ENCODE measurements at regions of chr3 and their contacts with region 1.

Region 1: DNA sequence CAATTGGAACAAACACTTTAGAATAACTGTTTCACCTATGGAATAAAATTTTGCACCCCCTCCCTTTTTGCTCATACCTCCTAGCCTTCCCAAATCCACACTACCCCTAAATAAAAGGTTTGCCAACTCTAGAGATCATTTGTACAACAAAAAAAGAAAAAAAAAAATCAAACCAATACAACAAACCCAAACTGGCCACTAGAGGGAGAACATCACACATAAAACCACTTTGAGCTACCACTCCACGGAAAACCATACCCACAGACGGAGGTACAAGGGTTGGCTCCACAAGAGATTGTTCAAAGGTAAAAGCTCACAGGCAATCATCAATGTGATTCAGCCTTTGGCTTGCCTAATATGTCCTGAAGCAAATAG is 47.6 kb downstream of the SETMAR start:
- DNase-seq: no peak
- H3K4me3 ChIP-seq: peak overlapping the region in 3 of 4 donors; percentile 17 to 34 (median 27)
- H3K27ac ChIP-seq: peak overlapping the region; percentile 12 to 65 (median 39)
- H3K4me1 ChIP-seq: peaks cover 0 to 9% (median 0%) of the 10 kb centered on the region in 4 donors
- H3K27me3 ChIP-seq: no peaks in the 10 kb centered on the region
- CTCF ChIP-seq: peak; percentile 51 to 77 (median 72)
- EP300 ChIP-seq: no peak
- POLR2A ChIP-seq: no peak

Region 2: GRCh38 chr3:4416961-4417360 is 66.2 kb after region 1 on chr3:
- intact Hi-C with region 1: no loop called
- DNase-seq: no peak
- H3K4me3 ChIP-seq: no peak overlapping the region
- H3K27ac ChIP-seq: peak overlapping the region in 3 of 4 donors; percentile 12 to 57 (median 17)
- H3K4me1 ChIP-seq: peaks cover 0 to 9% (median 4%) of the 10 kb centered on the region in 4 donors
- H3K27me3 ChIP-seq: no peaks in the 10 kb centered on the region
- CTCF ChIP-seq: no peak
- EP300 ChIP-seq: no peak
- POLR2A ChIP-seq: no peak

Region 3: DNA sequence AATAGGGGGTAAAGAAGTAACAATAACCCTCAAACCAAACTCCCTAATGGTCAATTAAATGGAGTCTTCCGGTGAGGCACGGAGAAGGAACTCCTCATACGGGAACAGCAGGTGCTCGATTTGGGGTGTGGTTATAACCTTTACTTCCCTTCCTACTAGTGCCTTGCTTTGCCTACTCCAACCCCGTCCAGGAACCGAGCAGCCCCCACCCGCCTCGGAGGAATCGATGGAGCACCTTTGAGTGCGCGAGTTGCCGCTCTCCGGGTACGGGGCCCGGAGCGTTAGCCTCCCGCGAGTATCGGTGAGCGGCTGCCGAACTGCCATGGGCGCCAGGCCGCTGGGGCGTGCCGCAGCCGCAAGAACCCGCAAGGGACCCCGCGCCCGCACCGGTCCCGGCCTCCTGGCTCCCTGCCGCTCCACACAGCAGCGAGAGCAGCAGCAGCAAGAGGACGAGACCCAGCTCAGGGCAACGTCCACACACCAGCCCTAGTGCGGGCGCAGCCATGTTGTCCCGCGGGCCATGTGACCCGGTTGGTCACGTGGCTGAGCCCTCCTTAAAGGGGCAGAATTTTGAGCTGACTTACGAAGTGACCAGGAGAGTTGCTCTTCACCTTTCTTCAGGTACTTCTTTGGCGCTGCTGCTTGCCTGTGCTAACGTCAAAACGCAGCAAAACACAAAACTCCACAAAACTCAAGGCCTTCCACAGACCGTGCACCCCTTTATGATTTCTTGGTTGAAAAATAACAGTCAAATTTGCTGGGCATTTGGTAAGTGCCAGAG is 116.2 kb after region 1 on chr3 and contains the start of gene SUMF1:
- intact Hi-C with region 1: loop called (anchors 10 kb)
- DNase-seq: peak; percentile 89
- H3K4me3 ChIP-seq: peak within 1 kb of the TSS; percentile 77 to 88 (median 80)
- H3K27ac ChIP-seq: peak within 1 kb of the TSS; percentile 81 to 83 (median 82)
- H3K4me1 ChIP-seq: peaks cover 0 to 15% (median 8%) of the 10 kb centered on the region in 4 donors
- H3K27me3 ChIP-seq: no peaks in the 10 kb centered on the region
- CTCF ChIP-seq: no peak
- EP300 ChIP-seq: no peak
- POLR2A ChIP-seq: peak in 1 of 2 donors; percentile 15
- total RNA-seq, gene SUMF1: 20.2 to 57.4 (median 31.0) TPM

Region 4: GRCh38 chr3:4633078-4634004 is 282.6 kb after region 1 on chr3:
- intact Hi-C with region 1: loop called (anchors 1 kb)
- DNase-seq: no peak
- H3K4me3 ChIP-seq: no peak overlapping the region
- H3K27ac ChIP-seq: peak overlapping the region in 3 of 4 donors; percentile 34 to 47 (median 42)
- H3K4me1 ChIP-seq: peaks cover 0 to 3% (median 0%) of the 10 kb centered on the region in 4 donors
- H3K27me3 ChIP-seq: no peaks in the 10 kb centered on the region
- CTCF ChIP-seq: peak; percentile 70 to 87 (median 74)
- EP300 ChIP-seq: no peak
- POLR2A ChIP-seq: no peak

Region 5: GRCh38 chr3:5057857-5058324 is 707.1 kb after region 1 on chr3:
- intact Hi-C with region 1: loop called (anchors 10 kb)
- DNase-seq: peak; percentile 88
- H3K4me3 ChIP-seq: no peak overlapping the region
- H3K27ac ChIP-seq: peak overlapping the region in 1 of 4 donors; percentile 37
- H3K4me1 ChIP-seq: peaks cover 0 to 15% (median 6%) of the 10 kb centered on the region in 4 donors
- H3K27me3 ChIP-seq: no peaks in the 10 kb centered on the region
- CTCF ChIP-seq: peak; percentile 56 to 74 (median 68)
- EP300 ChIP-seq: no peak
- POLR2A ChIP-seq: no peak